ENCODE measurements at regions of chr4 and their contacts with region 1.

Region 1: DNA sequence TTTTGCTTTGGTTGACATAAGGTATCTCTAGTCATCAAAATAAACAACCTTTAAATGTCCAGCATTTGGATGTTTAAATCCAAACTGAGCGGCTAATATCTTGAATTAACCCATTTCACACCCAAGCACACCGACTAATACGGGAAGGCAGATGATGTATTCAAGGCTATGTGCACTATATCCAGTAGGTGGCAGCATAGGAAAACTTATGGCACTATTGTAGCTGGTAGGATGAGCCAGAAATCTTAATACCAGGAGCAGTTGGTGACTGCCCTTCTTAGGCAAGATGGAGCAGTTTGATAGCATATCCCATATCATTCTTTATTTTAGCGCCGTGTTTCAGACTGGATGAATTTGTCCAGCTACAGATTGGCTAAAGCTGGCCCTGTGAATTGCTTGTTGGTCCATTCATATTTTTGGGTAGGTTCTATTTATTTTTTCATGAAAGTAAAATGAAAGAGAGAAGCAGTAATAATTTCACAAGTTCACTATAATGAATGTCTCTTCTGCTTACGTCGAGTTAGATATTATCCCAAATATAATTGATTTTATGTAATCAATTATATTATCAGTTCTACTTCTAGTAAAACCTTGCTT is 24.4 kb downstream of the UCHL1 start:
- DNase-seq: no peak
- H3K4me3 ChIP-seq: no peak overlapping the region
- H3K27ac ChIP-seq: no peak overlapping the region
- H3K4me1 ChIP-seq: no peaks in the 10 kb centered on the region
- H3K27me3 ChIP-seq: no peaks in the 10 kb centered on the region
- CTCF ChIP-seq: peak; percentile 81 to 84 (median 83)
- POLR2A ChIP-seq: no peak

Region 2: GRCh38 chr4:41661442-41662076 is 380.4 kb after region 1 on chr4:
- intact Hi-C with region 1: loop called (anchors 5 kb)
- DNase-seq: no peak
- H3K4me3 ChIP-seq: no peak overlapping the region
- H3K27ac ChIP-seq: no peak overlapping the region
- H3K4me1 ChIP-seq: no peaks in the 10 kb centered on the region
- H3K27me3 ChIP-seq: no peaks in the 10 kb centered on the region
- CTCF ChIP-seq: peak; percentile 72 to 89 (median 79)
- POLR2A ChIP-seq: no peak

Region 3: DNA sequence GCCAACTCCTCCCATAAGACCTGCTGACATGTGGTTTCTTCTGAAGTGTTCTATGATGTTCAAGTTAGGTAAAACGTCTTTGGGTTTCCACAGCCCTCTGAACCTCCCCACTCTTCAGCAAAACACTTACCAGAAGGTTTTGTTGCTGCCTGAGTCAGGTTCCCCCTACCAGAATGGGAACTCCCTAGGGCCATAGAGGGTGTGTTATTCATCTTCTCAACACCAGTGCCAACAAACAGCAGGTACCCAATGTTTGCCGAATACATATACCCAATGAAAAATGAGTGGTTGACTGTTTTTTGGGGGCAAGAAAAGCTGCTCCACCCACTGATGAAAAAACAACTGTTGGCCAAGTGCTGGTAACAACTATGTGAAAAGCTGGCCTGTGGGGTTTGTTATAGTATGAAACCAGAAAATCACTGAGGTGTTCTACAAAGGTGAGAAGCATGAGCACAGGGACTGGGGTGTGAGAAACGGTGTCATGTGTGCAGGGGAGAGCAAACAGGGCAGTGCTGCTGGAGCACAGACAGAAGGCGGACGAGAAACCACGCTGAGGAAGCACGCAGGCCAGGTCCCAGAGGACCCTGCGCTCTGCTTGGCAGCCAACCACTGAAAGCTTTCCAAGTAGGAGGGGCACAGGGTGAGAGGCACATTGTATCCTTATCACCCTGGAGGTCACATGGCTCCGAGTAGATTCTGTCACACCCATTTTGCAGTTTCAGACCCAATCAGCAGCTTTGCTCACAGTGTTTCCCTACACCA is 1346.9 kb after region 1 on chr4:
- intact Hi-C with region 1: no loop called
- DNase-seq: no peak
- H3K4me3 ChIP-seq: no peak overlapping the region
- H3K27ac ChIP-seq: no peak overlapping the region
- H3K4me1 ChIP-seq: no peaks in the 10 kb centered on the region
- H3K27me3 ChIP-seq: no peaks in the 10 kb centered on the region
- CTCF ChIP-seq: no peak
- POLR2A ChIP-seq: no peak

Measured in vagina (tissue), 2 donors.